ENCODE measurements at regions of chr6 and their contacts with region 1.

Region 1: DNA sequence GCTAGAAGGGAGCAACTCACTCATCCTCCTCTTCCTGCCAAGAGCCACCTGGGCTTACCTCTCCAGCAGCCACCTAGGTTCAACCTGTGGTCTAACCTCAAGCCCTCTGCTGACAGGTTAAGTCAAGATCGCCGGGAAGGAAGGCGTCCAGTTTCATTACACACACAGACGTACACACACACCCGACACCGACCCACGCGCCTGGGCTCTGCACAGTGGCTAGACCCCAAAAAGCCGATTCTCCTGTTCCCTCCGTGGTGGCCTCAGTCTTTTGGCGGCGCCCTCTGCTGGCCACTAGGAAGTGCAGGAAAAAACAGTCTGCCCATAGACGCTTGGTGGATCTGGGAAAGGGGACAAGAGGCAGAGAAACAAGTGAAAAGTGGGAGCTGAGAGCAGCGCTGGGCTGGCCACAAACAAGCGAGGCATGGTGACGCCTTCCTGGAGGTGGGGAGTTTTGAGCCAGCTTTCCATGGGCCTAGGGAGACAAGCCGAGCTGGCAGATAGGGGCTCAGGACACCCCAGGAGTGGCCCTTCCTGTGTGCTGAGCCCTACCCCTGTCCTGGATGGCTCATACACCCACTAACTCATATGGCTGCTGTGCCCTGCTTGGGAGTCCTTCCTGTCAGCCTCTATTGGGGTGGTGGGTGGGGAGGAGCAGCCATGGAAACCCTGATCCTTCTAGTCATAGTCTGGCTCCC is 52.7 kb downstream of the MRPL14 start:
- DNase-seq: peak; percentile 73
- H3K4me3 Mint-ChIP-seq: peak overlapping the region; percentile 73
- H3K27ac Mint-ChIP-seq: no peak overlapping the region
- H3K4me1 Mint-ChIP-seq: peaks cover 19% of the 10 kb centered on the region
- H3K27me3 Mint-ChIP-seq: peaks cover 3% of the 10 kb centered on the region

Region 2: GRCh38 chr6:43608310-43608763 is 466.3 kb before region 1 on chr6:
- CTCF ChIA-PET with region 1: interaction called, 4 read pairs
- intact Hi-C with region 1: loop called (anchors 1 kb)
- DNase-seq: peak; percentile 75
- H3K4me3 Mint-ChIP-seq: no peak overlapping the region
- H3K27ac Mint-ChIP-seq: no peak overlapping the region
- H3K4me1 Mint-ChIP-seq: peaks cover 2% of the 10 kb centered on the region
- H3K27me3 Mint-ChIP-seq: no peaks in the 10 kb centered on the region

Region 3: GRCh38 chr6:43723737-43724295 is 350.8 kb before region 1 on chr6:
- CTCF ChIA-PET with region 1: interaction called, 38 read pairs
- intact Hi-C with region 1: loop called (anchors 1 kb)
- DNase-seq: peak; percentile 90
- H3K4me3 Mint-ChIP-seq: peak overlapping the region; percentile 72
- H3K27ac Mint-ChIP-seq: no peak overlapping the region
- H3K4me1 Mint-ChIP-seq: peaks cover 23% of the 10 kb centered on the region
- H3K27me3 Mint-ChIP-seq: no peaks in the 10 kb centered on the region

Region 4: DNA sequence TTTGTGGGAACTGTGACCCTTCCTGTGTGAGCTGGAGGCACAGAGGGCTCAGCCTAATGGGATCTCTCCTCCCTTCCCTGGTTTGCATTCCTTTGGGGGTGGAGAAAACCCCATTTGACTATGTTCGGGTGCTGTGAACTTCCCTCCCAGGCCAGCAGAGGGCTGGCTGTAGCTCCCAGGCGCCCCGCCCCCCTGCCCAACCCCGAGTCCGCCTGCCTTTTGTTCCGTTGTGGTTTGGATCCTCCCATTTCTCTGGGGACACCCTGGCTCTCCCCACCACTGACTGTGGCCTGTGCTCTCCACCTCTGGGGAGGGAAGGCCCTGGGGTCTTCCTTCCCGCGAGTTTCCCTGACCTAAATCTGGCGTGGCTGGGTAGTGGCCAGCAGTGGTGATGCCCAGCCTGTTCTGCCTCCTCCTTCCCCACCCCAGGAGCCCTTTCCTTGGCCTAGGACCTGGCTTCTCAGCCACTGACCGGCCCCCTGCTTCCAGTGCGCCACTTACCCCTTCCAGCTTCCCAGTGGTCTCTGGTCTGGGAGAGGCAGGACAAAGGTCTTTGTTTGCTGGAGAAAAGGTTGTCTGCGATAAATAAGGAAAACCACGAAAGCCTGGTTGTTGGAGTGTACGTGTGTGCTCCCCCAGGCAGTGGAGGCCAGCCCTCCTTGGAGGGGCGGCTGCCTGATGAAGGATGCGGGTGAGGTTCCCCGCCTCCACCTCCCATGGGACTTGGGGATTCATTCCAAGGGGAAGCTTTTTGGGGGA is 299.6 kb before region 1 on chr6:
- CTCF ChIA-PET with region 1: interaction called, 45 read pairs
- intact Hi-C with region 1: loop called (anchors 1 kb)
- DNase-seq: peak; percentile 73
- H3K4me3 Mint-ChIP-seq: peak overlapping the region; percentile 18
- H3K27ac Mint-ChIP-seq: no peak overlapping the region
- H3K4me1 Mint-ChIP-seq: peaks cover 29% of the 10 kb centered on the region
- H3K27me3 Mint-ChIP-seq: no peaks in the 10 kb centered on the region

Region 5: DNA sequence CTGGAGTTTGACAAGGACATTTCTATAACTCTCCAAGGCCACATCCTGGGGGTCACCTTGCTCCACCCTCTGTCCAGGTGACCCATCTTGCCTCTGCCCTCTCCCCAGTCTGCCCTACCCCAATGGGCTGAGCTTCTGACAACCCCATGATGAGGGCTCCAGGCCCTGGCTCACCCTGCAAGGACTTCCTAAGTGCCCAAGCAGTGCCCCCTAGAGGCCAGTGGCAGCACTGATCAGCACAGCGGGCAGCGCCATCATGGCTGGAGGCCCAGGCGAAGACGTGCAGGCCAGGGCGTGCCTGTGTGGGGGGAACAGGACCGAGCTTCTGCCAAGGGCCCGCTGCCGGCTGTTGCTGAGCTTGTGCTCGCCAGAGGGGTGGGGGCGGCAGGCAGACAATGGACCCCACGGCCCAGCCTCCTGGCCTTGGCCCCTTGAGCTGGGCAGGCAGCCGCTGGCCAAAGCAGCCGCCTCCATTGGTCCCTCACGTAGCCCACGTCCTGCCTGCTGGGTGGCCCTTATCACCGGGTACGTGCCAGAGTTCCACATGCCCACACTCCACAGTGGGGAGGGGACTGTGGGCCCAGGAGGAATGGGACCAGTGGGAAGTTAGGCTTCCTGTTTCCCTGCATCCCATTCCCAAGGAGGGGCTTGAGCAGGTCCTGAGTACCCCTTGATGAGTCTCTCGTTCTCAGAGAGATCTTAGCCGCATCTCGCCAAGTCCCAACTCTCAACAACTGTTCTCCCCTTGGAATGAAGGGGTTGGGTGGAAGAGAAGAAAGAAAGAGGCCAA is 11.6 kb before region 1 on chr6:
- CTCF ChIA-PET with region 1: interaction called, 15 read pairs
- intact Hi-C with region 1: no loop called
- DNase-seq: peak; percentile 67
- H3K4me3 Mint-ChIP-seq: no peak overlapping the region
- H3K27ac Mint-ChIP-seq: peak overlapping the region; percentile 51
- H3K4me1 Mint-ChIP-seq: peaks cover 6% of the 10 kb centered on the region
- H3K27me3 Mint-ChIP-seq: peaks cover 2% of the 10 kb centered on the region

Region 6: GRCh38 chr6:44133003-44133931 is 58.7 kb after region 1 on chr6:
- CTCF ChIA-PET with region 1: no interaction called
- intact Hi-C with region 1: no loop called
- DNase-seq: no peak
- H3K4me3 Mint-ChIP-seq: no peak overlapping the region
- H3K27ac Mint-ChIP-seq: no peak overlapping the region
- H3K4me1 Mint-ChIP-seq: peaks cover 3% of the 10 kb centered on the region
- H3K27me3 Mint-ChIP-seq: no peaks in the 10 kb centered on the region

Region 7: DNA sequence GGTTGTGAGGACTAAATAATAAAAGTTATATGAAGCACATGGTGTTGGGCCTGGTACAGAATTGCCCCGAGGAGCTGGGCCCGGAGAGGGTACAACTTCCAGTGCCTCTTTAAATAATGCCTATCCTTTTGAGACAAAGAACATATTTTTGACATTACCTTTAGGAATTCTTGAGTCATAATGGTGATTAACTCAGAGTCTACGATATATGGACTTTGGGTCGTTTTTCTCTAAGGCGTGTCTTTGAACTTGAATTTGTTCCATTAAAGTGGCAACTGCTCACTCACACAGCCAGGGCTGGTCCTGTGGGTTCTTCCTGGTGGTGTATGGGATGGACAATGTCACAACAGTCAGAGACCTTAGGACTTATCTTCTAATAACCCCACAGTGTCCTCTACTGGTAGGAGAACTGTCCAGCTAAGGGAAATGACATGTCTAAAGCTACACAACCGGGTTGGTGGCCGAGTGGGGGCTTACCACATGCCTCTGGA is 419.5 kb after region 1 on chr6:
- CTCF ChIA-PET with region 1: no interaction called
- intact Hi-C with region 1: no loop called
- DNase-seq: no peak
- H3K4me3 Mint-ChIP-seq: no peak overlapping the region
- H3K27ac Mint-ChIP-seq: no peak overlapping the region
- H3K4me1 Mint-ChIP-seq: no peaks in the 10 kb centered on the region
- H3K27me3 Mint-ChIP-seq: peaks cover under 1% of the 10 kb centered on the region